MCF 10A (cell line): ENCODE measurements at regions of chr2 and their contacts with region 1.

Region 1: GRCh38 chr2:68141875-68142274 is 15.8 kb upstream of the PNO1 start:
- DNase-seq: no peak
- H3K4me3 Mint-ChIP-seq: no peak overlapping the region
- H3K27ac Mint-ChIP-seq: no peak overlapping the region
- H3K4me1 Mint-ChIP-seq: no peaks in the 10 kb centered on the region
- H3K27me3 Mint-ChIP-seq: no peaks in the 10 kb centered on the region
- CTCF ChIP-seq: no peak

Region 2: DNA sequence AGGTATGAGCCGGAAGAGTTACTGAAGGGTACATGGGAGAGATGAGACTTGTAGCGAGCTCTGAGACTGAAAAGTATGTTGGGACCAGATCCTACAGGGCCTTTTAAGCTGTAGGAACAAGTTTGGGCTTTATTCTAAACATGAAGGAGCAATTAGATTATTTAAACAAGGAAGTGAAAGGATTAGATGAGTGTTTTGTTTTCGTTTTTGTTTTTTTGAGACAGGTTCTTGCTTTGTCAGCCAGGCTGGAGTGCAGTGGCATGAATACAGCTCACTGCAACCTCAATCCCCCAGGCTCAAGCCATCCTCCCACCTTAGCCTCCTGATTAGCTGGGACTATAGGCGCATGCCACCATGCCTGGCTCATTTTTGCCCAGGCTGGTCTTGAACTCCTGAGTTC is 189.8 kb before region 1 on chr2:
- CTCF ChIA-PET with region 1: no interaction called
- POLR2A ChIA-PET with region 1: no interaction called
- intact Hi-C with region 1: no loop called
- DNase-seq: no peak
- H3K4me3 Mint-ChIP-seq: no peak overlapping the region
- H3K27ac Mint-ChIP-seq: no peak overlapping the region
- H3K4me1 Mint-ChIP-seq: peaks cover 17% of the 10 kb centered on the region
- H3K27me3 Mint-ChIP-seq: no peaks in the 10 kb centered on the region
- CTCF ChIP-seq: no peak

Region 3: DNA sequence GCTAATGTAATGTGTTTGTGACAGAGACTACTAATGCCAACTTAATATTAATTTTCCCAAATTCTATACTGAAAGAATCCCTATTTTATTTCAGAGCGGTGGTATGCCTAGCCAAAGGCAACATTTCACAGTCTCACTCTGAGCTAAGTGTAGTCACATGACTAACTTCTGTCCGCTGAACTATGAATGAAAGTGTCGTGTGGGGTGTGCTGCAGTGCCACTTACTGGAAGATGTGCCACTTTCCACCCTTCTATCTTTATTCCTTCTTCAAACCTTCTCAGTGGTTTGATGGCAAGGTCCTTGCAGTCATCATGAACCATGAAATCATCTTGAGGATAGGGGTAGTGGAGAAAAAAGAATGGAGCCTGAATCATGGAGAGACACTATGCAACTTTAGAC is 31.8 kb before region 1 on chr2:
- CTCF ChIA-PET with region 1: no interaction called
- POLR2A ChIA-PET with region 1: no interaction called
- intact Hi-C with region 1: no loop called
- DNase-seq: no peak
- H3K4me3 Mint-ChIP-seq: no peak overlapping the region
- H3K27ac Mint-ChIP-seq: no peak overlapping the region
- H3K4me1 Mint-ChIP-seq: no peaks in the 10 kb centered on the region
- H3K27me3 Mint-ChIP-seq: no peaks in the 10 kb centered on the region
- CTCF ChIP-seq: no peak

Region 4: DNA sequence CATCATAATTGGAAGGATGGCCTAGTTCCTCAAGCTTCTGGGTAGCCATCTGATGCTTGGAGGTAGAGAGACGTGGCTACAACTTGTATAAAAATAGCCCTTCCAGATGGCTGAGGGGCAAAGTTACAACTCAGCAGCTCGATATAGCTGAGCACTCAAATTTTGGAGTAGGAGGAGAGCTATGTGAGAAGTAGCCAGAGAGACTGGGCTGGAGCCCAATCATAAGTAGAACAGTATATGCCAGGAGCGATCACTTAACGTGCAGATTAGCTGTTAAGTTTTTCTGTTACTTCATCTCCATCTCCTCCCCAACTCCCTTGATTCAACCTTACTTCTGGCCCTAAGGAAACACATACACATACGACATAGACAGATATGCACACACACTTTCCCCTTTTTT is 149.0 kb after region 1 on chr2:
- CTCF ChIA-PET with region 1: interaction called, 15 read pairs
- POLR2A ChIA-PET with region 1: no interaction called
- intact Hi-C with region 1: no loop called
- DNase-seq: no peak
- H3K4me3 Mint-ChIP-seq: no peak overlapping the region
- H3K27ac Mint-ChIP-seq: no peak overlapping the region
- H3K4me1 Mint-ChIP-seq: peaks cover 10% of the 10 kb centered on the region
- H3K27me3 Mint-ChIP-seq: no peaks in the 10 kb centered on the region
- CTCF ChIP-seq: no peak